ENCODE measurements at regions of chr2 and their contacts with region 1.

Region 1: DNA sequence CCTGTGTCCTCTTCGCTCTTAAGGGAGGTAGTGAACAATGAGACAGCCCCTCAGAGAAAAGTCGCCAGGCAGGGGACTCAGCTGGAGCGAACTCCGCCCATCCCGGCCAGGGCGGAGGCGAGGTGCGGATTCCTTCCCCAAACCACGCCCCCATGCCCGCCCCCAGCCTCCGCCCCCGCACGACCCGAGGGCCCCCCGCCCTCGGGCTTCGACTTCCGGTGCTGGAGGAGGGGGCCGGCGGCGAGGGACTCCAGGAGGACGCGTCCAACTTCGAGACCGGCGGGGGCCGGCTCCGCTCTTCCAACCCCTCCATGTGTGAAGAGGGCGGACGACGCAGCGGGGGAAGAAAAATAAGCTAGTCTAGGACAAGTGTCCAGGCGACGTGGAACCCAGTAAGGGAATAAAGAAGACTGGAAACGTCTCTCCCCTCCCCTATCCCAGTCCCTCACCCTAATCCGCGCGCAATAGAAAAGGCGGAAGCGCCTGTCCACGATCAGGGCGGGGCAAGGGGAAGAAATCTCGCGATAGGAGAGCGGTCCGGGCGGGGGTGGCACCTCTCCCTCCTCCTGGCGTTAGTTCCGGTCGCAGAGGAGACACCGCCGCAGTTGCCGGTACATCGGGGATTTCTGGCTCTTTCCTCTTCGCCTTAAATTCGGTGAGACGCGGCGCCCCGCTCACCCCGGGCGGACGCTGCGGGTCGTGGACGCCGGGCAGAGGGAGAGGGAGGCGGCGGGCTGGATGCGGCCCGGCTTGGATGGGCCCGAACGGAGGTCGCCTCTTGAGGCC is at the start of gene BZW1:
- DNase-seq: peak; percentile 95
- ATAC-seq: peak; percentile 89
- H3K4me3 ChIP-seq: peak within 1 kb of the TSS; percentile 89 to 99 (median 92)
- H3K27ac ChIP-seq: peak within 1 kb of the TSS; percentile 95
- H3K4me1 ChIP-seq: peaks cover 52% of the 10 kb centered on the region
- H3K27me3 ChIP-seq: no peaks in the 10 kb centered on the region; a peak in 1 of 5 replicates
- CTCF ChIP-seq: no peak; the same call in 1 of the 2 replicates
- EP300 ChIP-seq: peak in 1 of 2 experiments; percentile 22; a peak in 1 of 4 replicates
- POLR2A ChIP-seq: peak; percentile 90 to 96
- RAD21 ChIP-seq: no peak
- total RNA-seq, gene BZW1: 384 and 709 TPM in 2 replicates

Region 2: DNA sequence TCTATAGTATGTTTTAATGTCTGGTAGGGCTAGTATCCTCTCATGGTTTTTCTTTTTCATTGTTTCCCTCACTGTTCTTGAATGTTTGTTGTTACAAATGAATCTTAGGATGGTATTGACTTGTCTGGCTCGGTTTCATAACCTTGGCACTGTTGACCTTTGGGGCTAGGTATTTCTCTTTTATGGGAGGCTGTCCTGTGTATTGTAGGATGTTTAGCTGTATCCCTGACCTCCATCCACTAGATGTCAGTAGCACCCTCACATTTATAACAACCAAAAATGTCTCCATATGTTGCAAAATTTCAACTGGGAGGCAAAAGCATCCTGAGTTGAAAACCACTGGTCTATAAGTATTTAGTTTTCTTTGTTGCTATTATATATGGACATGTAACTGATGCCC is 232.8 kb before region 1 on chr2:
- CTCF ChIA-PET with region 1: no interaction called
- POLR2A ChIA-PET with region 1: no interaction called
- in situ Hi-C with region 1: no loop called
- intact Hi-C with region 1: loop called (anchors 5 kb)
- DNase-seq: peak; percentile 83
- ATAC-seq: peak; percentile 100
- H3K4me3 ChIP-seq: no peak overlapping the region
- H3K27ac ChIP-seq: no peak overlapping the region
- H3K4me1 ChIP-seq: peaks cover 8% of the 10 kb centered on the region
- H3K27me3 ChIP-seq: no peaks in the 10 kb centered on the region
- CTCF ChIP-seq: peak; percentile 88
- EP300 ChIP-seq: peak in 1 of 2 experiments; percentile 44; a peak in 1 of 4 replicates
- POLR2A ChIP-seq: no peak
- RAD21 ChIP-seq: peak; percentile 84

Region 3: DNA sequence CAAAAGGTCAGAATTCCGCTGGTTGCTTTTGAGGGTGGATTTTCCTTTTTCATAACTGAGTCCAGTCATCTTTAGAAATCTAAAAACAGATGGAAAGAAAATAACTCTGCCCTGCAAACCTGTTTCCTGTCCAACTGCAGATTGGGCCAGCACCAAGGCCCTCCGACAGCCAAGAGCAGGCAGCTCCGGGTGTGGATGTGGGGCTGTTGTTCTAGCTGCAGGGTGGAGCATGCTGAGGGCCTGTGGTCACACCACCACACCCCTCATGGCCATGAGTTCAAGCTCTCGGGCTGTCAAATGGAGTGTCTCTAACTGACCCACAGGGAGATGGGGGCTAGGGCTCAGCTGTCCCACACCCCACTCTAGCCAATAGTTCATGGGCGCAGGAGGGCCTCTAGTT is 69.1 kb before region 1 on chr2:
- CTCF ChIA-PET with region 1: no interaction called
- POLR2A ChIA-PET with region 1: interaction called, 10 read pairs
- in situ Hi-C with region 1: loop called (anchors 5 kb)
- intact Hi-C with region 1: loop called (anchors 1 kb)
- DNase-seq: no peak
- ATAC-seq: peak; percentile 6; the same call in 1 of the 3 replicates
- H3K4me3 ChIP-seq: no peak overlapping the region
- H3K27ac ChIP-seq: peak overlapping the region; percentile 69
- H3K4me1 ChIP-seq: peaks cover 49% of the 10 kb centered on the region
- H3K27me3 ChIP-seq: peaks cover 0 to 16% of the 10 kb centered on the region in 2 experiments; a peak in 2 of 5 replicates
- CTCF ChIP-seq: no peak
- EP300 ChIP-seq: no peak
- POLR2A ChIP-seq: no peak
- RAD21 ChIP-seq: no peak

Region 4: GRCh38 chr2:200765139-200765951 is 46.2 kb before region 1 on chr2:
- CTCF ChIA-PET with region 1: no interaction called
- POLR2A ChIA-PET with region 1: no interaction called
- in situ Hi-C with region 1: no loop called
- intact Hi-C with region 1: no loop called
- DNase-seq: peak; percentile 34
- ATAC-seq: peak; percentile 42; the same call in 2 of the 3 replicates
- H3K4me3 ChIP-seq: no peak overlapping the region
- H3K27ac ChIP-seq: no peak overlapping the region
- H3K4me1 ChIP-seq: peaks cover 30% of the 10 kb centered on the region
- H3K27me3 ChIP-seq: peaks cover 3 to 17% of the 10 kb centered on the region in 2 experiments; a peak in 3 of 5 replicates
- CTCF ChIP-seq: no peak
- EP300 ChIP-seq: no peak
- POLR2A ChIP-seq: no peak
- RAD21 ChIP-seq: no peak

Region 5: DNA sequence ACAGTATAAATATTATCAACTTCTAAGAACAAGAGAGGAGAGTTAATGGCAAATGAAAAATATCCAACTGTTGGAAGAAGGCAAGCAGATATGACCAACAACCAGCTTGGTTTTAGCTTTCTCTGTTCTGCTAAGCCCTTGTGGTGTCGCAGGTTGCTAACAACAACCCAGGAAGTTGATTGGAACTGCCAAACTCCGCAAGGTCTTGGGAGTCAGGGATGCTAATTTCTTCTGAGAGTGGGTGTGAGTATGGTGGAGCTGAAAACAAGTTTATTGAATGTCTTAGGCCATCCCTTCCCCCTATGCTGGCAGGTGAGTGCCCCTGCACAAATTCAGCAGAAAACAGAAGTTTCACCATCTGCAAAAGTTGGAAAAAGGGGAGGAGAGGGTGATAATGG is 17.7 kb after region 1 on chr2:
- CTCF ChIA-PET with region 1: no interaction called
- POLR2A ChIA-PET with region 1: interaction called, 15 read pairs
- in situ Hi-C with region 1: no loop called
- intact Hi-C with region 1: no loop called
- DNase-seq: no peak
- ATAC-seq: peak; percentile 8
- H3K4me3 ChIP-seq: no peak overlapping the region
- H3K27ac ChIP-seq: no peak overlapping the region
- H3K4me1 ChIP-seq: no peaks in the 10 kb centered on the region
- H3K27me3 ChIP-seq: no peaks in the 10 kb centered on the region
- CTCF ChIP-seq: no peak
- EP300 ChIP-seq: no peak
- POLR2A ChIP-seq: no peak
- RAD21 ChIP-seq: no peak

Region 6: DNA sequence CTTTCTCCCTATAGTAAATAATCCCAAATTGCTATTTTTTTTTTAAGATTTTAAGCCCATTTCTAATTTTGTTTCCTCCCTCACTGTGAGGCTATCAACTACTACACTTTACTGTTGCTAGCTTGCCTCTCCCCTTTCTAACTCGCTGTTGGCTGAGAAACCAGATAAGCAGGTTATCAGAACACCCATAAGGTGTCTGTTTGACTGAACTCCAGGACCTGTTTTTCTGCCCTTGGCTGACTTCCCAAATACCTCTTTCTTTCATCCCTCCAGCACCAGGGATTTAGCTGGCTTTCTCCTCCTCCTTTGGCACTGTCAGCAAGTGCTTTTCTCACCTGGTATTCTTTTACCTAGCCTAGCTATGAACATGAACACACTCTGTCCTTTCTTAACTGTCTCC is 628.7 kb after region 1 on chr2:
- CTCF ChIA-PET with region 1: no interaction called
- POLR2A ChIA-PET with region 1: no interaction called
- in situ Hi-C with region 1: no loop called
- intact Hi-C with region 1: no loop called
- DNase-seq: peak; percentile 77
- ATAC-seq: peak; percentile 94
- H3K4me3 ChIP-seq: no peak overlapping the region
- H3K27ac ChIP-seq: peak overlapping the region; percentile 14
- H3K4me1 ChIP-seq: peaks cover 29% of the 10 kb centered on the region
- H3K27me3 ChIP-seq: no peaks in the 10 kb centered on the region
- CTCF ChIP-seq: no peak
- EP300 ChIP-seq: 0 out of 4 replicates have a peak, but pooled peaks of 1 of the 2 experiments have one; percentile 7
- POLR2A ChIP-seq: no peak
- RAD21 ChIP-seq: no peak

Measured in HepG2 (cell line).